Pancreas (tissue), 10 donors: ENCODE measurements at regions of chr2 and their contacts with region 1.

Region 1: DNA sequence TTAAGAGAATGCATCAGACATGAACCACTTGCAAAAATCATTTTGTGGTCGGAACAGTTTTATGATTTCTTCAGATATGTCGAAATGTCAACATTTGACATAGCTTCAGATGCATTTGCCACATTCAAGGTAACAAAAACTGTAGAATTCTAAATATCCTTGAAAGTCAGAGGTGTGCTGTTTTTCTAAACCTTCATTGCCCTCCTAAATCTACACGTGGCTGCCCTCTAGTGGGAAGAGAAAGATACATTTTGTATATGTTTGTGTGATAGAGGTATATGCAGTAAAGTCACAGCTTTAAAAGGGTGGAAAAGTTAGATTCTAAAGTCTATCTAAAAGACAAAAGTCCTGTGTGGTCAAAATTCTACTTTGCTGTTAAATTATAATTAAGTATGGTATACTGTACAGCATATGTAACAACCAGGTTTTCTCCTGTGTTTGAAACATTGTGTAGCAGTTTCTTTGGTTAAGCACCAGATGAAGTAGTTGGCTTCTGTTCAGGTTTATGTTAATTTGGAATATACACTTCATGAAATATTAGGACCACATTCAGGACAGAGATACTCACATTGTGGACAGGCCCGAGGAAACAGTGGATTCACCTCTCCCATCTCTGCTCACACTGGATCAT is 65.9 kb upstream of the ITM2C start:
- DNase-seq: no peak
- ATAC-seq: peak; percentile 68 to 78 (median 74)
- H3K4me3 ChIP-seq: no peak overlapping the region
- H3K27ac ChIP-seq: no peak overlapping the region
- H3K4me1 ChIP-seq: peaks cover 0 to 16% (median 0%) of the 10 kb centered on the region in 3 donors
- H3K27me3 ChIP-seq: no peaks in the 10 kb centered on the region
- CTCF ChIP-seq: peak; percentile 14 to 42 (median 39)

Region 2: DNA sequence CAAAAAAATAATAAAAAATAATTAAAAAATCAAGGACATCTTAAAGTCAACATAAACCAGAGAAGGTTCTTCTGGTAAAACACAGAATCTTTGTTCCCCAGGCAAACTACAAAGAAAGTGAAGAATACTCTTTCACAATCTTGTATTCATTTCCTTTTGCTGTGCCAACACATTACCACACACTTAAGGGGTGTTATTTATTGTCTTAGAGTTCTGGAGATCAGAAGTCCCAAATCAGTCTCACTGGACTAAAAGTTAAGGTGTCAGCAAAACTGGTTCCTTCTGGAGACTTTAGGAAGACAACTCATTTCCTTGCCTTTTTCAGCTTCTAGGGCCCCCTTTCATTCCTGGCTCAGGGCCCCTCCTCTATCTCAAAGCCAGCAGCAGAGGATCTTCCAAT is 98.4 kb before region 1 on chr2:
- intact Hi-C with region 1: loop called in 1 of 3 experiments (anchors 10 kb)
- DNase-seq: no peak
- ATAC-seq: peak in 2 of 4 donors; percentile 59 to 61
- H3K4me3 ChIP-seq: no peak overlapping the region
- H3K27ac ChIP-seq: no peak overlapping the region
- H3K4me1 ChIP-seq: no peaks in the 10 kb centered on the region
- H3K27me3 ChIP-seq: no peaks in the 10 kb centered on the region
- CTCF ChIP-seq: no peak

Region 3: DNA sequence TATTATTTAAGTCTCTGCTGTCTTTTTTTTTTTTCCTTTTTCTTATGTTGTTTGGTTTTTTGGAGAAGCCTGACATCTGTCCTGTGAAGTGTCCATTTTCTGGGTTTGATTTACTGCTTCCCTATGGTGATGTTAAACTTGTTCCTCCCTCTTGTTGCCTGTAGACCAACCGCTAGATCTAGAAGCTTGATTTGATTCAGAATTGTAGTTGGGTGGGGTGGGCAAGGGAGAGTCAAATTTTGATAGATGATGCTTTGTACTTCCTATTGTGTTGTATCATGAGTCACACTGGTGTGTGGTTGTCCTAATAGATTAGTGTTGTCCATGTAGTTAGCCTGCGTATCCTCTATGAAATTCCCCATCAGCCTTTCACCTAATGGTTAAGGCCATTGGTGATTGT is 50.8 kb before region 1 on chr2:
- intact Hi-C with region 1: no loop called
- DNase-seq: no peak
- ATAC-seq: no peak
- H3K4me3 ChIP-seq: no peak overlapping the region
- H3K27ac ChIP-seq: no peak overlapping the region
- H3K4me1 ChIP-seq: peaks cover 0 to 7% (median 0%) of the 10 kb centered on the region in 3 donors
- H3K27me3 ChIP-seq: no peaks in the 10 kb centered on the region
- CTCF ChIP-seq: no peak

Region 4: DNA sequence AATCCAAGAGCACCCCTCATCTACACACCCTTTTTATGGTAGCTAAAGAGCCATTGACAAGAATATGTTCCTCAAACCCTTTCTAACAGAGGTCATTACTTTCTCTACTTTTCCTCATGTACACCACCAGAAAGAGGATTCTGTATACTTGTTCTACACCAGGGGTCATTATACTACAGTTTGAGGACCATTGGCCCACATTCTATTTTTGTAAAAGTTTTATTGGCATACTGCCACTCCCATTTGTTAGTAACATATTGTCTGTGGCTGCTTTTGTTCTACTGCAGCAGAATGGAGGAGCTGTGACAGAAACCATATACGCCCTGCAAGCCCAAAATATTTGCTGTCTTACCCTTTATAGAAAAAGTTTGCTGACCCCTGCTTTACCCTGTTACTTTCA is 311.7 kb after region 1 on chr2:
- intact Hi-C with region 1: no loop called
- DNase-seq: no peak
- ATAC-seq: peak in 1 of 4 donors; percentile 15
- H3K4me3 ChIP-seq: no peak overlapping the region
- H3K27ac ChIP-seq: no peak overlapping the region
- H3K4me1 ChIP-seq: no peaks in the 10 kb centered on the region
- H3K27me3 ChIP-seq: no peaks in the 10 kb centered on the region
- CTCF ChIP-seq: no peak